PC-9 (cell line): ENCODE measurements at regions of chr1 and their contacts with region 1.

Region 1: DNA sequence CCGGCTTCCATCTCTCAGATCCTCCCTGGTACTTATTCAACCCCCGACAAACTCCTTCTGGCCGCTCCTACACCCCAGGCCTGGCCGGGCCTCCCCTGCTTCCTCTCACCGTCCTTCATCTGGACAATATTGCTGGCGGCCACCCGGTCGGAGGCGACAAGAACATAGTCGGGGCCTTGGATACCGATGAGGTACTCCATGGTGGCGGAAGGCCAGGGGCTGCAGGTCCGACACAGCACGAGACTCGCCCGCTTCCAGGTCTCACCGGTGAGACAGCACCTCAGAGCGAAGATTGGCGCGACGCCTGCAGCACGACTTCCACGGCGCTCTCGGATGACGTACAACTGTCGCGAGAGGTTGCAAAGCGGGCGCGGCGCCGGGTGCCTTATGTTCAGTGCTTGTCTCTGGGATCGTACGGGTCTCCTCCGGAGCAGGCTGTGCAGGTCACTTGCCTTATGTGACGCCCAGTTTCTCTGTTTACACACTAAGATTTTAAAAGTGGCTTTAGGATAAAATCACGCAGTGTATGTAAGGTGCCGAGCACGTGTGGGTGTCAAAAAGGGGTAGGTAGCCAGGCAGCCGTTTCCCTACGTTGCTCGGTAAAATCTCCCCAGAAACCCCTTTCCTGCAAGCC is at the start of gene PSMB2:
- DNase-seq: peak; percentile 88 to 97
- H3K4me3 ChIP-seq: peak within 1 kb of the TSS; percentile 84
- H3K27ac ChIP-seq: peak within 1 kb of the TSS; percentile 88
- H3K4me1 ChIP-seq: peaks cover 40% of the 10 kb centered on the region
- H3K27me3 ChIP-seq: peaks cover 17% of the 10 kb centered on the region
- CTCF ChIP-seq: no peak
- total RNA-seq, gene PSMB2: 138 and 206 TPM in 2 replicates

Region 2: DNA sequence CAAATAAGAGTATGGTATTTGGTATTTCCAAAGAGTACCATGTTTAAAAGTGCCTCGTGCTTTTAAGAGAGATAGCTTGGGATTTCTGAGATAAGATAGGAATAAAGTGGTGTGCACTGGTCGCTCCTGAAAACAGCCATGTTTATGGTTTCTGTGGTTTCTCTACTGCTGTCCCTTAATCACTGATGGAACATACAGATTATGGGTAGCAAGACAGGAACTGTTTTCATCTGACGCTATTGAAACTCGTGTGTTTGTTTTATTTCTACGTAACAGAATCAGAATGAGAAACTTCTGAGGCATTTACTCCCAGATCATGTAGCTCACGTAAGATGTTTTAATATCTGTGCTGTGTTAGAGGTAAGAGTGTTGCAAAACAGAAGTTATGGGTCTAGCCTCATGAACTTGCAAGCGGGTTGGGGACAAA is 210.2 kb before region 1 on chr1:
- CTCF ChIA-PET with region 1: no interaction called
- POLR2A ChIA-PET with region 1: no interaction called
- intact Hi-C with region 1: no loop called
- DNase-seq: no peak
- H3K4me3 ChIP-seq: no peak overlapping the region
- H3K27ac ChIP-seq: no peak overlapping the region
- H3K4me1 ChIP-seq: no peaks in the 10 kb centered on the region
- H3K27me3 ChIP-seq: no peaks in the 10 kb centered on the region
- CTCF ChIP-seq: no peak

Region 3: DNA sequence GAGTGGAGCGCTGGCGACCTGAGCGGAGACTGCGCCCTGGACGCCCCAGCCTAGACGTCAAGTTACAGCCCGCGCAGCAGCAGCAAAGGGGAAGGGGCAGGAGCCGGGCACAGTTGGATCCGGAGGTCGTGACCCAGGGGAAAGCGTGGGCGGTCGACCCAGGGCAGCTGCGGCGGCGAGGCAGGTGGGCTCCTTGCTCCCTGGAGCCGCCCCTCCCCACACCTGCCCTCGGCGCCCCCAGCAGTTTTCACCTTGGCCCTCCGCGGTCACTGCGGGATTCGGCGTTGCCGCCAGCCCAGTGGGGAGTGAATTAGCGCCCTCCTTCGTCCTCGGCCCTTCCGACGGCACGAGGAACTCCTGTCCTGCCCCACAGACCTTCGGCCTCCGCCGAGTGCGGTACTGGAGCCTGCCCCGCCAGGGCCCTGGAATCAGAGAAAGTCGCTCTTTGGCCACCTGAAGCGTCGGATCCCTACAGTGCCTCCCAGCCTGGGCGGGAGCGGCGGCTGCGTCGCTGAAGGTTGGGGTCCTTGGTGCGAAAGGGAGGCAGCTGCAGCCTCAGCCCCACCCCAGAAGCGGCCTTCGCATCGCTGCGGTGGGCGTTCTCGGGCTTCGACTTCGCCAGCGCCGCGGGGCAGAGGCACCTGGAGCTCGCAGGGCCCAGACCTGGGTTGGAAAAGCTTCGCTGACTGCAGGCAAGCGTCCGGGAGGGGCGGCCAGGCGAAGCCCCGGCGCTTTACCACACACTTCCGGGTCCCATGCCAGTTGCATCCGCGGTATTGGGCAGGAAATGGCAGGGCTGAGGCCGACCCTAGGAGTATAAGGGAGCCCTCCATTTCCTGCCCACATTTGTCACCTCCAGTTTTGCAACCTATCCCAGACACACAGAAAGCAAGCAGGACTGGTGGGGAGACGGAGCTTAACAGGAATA is 64.0 kb before region 1 on chr1:
- CTCF ChIA-PET with region 1: no interaction called
- POLR2A ChIA-PET with region 1: no interaction called
- intact Hi-C with region 1: loop called (anchors 5 kb)
- DNase-seq: no peak
- H3K4me3 ChIP-seq: no peak overlapping the region
- H3K27ac ChIP-seq: no peak overlapping the region
- H3K4me1 ChIP-seq: no peaks in the 10 kb centered on the region; the same call in 1 of the 2 replicates
- H3K27me3 ChIP-seq: no peaks in the 10 kb centered on the region
- CTCF ChIP-seq: no peak

Region 4: GRCh38 chr1:35603468-35603867 is 37.9 kb before region 1 on chr1:
- CTCF ChIA-PET with region 1: no interaction called
- POLR2A ChIA-PET with region 1: no interaction called
- intact Hi-C with region 1: no loop called
- DNase-seq: no peak
- H3K4me3 ChIP-seq: no peak overlapping the region
- H3K27ac ChIP-seq: no peak overlapping the region
- H3K4me1 ChIP-seq: no peaks in the 10 kb centered on the region
- H3K27me3 ChIP-seq: no peaks in the 10 kb centered on the region
- CTCF ChIP-seq: no peak

Region 5: GRCh38 chr1:35655196-35655595 is 13.8 kb after region 1 on chr1:
- CTCF ChIA-PET with region 1: no interaction called
- POLR2A ChIA-PET with region 1: no interaction called
- intact Hi-C with region 1: no loop called
- DNase-seq: no peak
- H3K4me3 ChIP-seq: no peak overlapping the region
- H3K27ac ChIP-seq: no peak overlapping the region
- H3K4me1 ChIP-seq: no peaks in the 10 kb centered on the region
- H3K27me3 ChIP-seq: peaks cover 70% of the 10 kb centered on the region
- CTCF ChIP-seq: no peak

Region 6: DNA sequence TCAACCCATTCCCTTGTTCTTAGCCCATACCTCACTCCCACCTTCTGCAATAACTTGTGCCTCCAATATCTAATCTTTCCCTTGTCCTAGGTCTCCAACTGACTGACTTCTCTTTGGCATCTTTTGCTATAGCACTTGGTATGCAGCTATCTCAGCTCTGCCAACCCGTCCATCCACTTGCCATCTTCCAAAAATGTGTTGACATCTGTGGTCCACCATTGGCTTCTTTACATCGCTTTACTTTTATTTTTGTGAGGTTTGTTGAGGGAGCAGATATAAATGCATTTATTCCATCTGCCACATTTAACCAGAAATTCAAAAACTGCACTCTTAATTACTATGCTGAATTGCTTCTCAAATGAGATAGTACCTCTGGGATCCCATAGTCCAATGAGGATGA is 24.9 kb after region 1 on chr1:
- CTCF ChIA-PET with region 1: no interaction called
- POLR2A ChIA-PET with region 1: interaction called, 10 read pairs
- intact Hi-C with region 1: no loop called
- DNase-seq: no peak
- H3K4me3 ChIP-seq: no peak overlapping the region
- H3K27ac ChIP-seq: no peak overlapping the region
- H3K4me1 ChIP-seq: no peaks in the 10 kb centered on the region
- H3K27me3 ChIP-seq: peaks cover 71% of the 10 kb centered on the region
- CTCF ChIP-seq: no peak

Region 7: GRCh38 chr1:35715568-35716002 is 74.2 kb after region 1 on chr1:
- CTCF ChIA-PET with region 1: interaction called, 11 read pairs
- POLR2A ChIA-PET with region 1: interaction called, 4 read pairs
- intact Hi-C with region 1: loop called (anchors 5 kb)
- DNase-seq: peak; percentile 41 to 61
- H3K4me3 ChIP-seq: no peak overlapping the region
- H3K27ac ChIP-seq: no peak overlapping the region
- H3K4me1 ChIP-seq: no peaks in the 10 kb centered on the region
- H3K27me3 ChIP-seq: no peaks in the 10 kb centered on the region
- CTCF ChIP-seq: peak; percentile 87

Region 8: DNA sequence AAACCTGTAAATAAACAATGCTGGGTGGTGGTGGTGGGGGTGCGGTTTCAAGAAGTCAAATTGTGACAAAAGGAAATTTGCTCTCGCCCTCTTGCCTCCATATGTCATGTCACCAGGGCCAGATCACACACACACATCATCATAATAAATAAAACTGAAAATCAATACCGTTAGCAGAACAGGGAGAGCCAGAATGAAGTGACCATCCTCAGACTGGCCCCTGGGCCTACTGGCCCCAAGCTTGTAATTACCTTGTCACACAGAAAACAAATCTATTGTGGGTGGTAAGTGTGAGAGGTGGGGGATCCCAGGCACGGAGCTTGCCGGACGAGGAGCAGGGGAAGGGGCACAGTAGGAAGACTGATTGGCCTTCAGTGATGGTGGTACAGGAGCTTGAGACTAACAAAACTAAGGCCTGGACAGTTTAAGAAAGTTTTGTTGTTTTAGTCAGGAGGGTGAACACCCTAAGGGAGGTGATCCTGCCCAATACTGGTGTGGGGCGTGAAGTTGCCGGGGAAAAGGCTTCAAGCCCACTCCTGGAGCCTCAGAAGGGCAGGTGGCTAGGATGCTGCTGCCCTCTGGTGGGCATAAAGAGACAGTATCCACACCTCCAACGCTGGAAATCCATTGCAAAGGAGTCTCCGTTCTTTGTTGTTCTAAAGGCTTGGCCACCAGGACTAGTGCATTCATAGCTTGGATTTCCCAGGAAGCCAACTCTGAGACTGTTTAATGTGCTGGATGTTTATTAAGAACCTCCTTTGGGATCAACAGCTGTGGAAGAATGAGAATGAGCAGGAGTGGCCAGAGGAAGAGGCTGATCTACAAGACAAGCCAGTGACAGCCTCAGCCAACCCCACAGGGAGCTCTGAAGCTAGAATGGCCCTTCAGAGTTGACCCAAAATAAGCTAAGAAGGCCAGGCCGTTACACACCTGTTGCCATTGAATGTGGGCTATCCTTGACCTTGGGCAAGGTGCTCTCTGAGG is 85.4 kb after region 1 on chr1:
- CTCF ChIA-PET with region 1: no interaction called
- POLR2A ChIA-PET with region 1: no interaction called
- intact Hi-C with region 1: no loop called
- DNase-seq: peak; percentile 42 to 46
- H3K4me3 ChIP-seq: no peak overlapping the region
- H3K27ac ChIP-seq: no peak overlapping the region
- H3K4me1 ChIP-seq: no peaks in the 10 kb centered on the region
- H3K27me3 ChIP-seq: no peaks in the 10 kb centered on the region
- CTCF ChIP-seq: peak; percentile 84

Region 9: DNA sequence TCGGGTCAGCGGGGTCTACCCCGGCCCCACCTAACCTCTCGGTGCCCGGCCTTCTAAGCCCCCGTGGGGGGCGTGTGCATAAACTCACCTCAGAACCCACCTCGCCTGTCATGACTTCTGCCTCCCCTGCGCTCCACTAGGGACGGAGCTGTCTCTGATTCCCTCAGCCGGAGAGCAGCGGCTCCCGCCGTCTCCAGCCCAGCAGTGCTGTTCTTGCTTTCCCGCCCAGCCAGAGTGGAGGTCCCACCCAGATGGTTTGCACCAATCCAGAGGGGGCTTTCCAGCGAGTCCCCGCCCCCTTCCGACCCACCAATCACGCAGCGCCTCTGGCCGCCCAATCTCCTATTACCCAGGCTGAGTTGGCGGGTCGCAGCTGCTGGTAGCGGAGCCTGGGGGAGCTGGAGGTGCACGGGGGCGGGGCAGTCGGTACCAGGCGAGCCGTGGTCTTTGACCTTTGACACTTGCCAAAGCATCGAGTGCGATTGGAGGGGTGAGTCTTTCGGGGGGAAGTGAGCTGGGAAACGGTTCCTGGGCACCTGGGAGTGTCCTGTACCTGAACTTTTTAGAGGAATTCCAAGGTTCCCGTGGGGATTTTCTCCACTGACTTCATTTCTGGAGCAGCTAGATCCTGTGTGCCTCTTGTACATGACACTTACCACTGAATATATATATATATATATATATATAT is 128.6 kb after region 1 on chr1 and contains the start of gene CLSPN:
- CTCF ChIA-PET with region 1: no interaction called
- POLR2A ChIA-PET with region 1: no interaction called
- intact Hi-C with region 1: loop called (anchors 5 kb)
- DNase-seq: peak; percentile 90 to 98
- H3K4me3 ChIP-seq: peak within 1 kb of the TSS; percentile 99
- H3K27ac ChIP-seq: no peak within 1 kb of the TSS
- H3K4me1 ChIP-seq: peaks cover 5% of the 10 kb centered on the region; the same call in 1 of the 2 replicates
- H3K27me3 ChIP-seq: no peaks in the 10 kb centered on the region
- CTCF ChIP-seq: no peak
- total RNA-seq, gene CLSPN: 18.9 and 26.7 TPM in 2 replicates